Motor neuron (in vitro differentiated cells): ENCODE measurements at regions of chr17 and their contacts with region 1.

Region 1: DNA sequence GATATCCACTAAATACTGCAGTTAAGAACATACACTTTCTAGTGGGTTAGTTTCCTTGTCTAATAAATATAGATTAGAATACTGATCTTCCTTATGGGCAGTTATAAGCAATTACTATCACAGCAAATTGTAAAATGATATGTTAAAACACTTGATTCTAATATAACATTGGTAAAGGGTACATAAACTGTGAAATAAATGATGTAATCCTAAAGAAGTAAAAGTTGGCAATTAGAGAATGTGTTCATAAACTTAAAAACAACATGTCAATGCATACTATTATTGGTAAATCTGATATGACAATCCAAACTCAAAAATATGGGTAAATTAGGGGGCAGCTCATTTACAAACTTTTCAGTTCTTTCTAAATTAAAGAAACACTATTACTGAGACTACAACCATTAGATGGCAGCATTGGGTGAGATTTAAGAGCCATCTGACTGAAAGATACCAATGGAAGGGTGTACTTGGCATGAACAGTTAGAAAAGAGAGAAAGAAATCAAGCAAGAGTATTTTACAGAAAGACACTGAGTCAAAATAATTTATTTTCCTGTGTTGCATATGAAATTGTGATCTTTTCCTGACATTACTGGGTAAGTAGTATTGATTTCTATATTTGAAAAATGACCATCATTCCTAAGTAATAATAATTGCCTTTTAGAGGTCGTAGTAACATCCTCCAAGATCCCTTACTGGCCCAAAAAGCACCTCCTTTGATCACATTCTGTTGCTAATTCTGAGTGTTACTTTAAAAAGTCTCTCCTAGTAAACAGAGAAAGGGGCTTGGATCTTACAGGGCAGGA is 119.6 kb downstream of the SPAG9 start:
- ATAC-seq: peak in 5 of 8 experiments; percentile 48 to 71 (median 55)
- H3K4me3 ChIP-seq: no peak overlapping the region
- H3K27ac ChIP-seq: no peak overlapping the region
- H3K4me1 ChIP-seq: no peaks in the 10 kb centered on the region

Region 2: DNA sequence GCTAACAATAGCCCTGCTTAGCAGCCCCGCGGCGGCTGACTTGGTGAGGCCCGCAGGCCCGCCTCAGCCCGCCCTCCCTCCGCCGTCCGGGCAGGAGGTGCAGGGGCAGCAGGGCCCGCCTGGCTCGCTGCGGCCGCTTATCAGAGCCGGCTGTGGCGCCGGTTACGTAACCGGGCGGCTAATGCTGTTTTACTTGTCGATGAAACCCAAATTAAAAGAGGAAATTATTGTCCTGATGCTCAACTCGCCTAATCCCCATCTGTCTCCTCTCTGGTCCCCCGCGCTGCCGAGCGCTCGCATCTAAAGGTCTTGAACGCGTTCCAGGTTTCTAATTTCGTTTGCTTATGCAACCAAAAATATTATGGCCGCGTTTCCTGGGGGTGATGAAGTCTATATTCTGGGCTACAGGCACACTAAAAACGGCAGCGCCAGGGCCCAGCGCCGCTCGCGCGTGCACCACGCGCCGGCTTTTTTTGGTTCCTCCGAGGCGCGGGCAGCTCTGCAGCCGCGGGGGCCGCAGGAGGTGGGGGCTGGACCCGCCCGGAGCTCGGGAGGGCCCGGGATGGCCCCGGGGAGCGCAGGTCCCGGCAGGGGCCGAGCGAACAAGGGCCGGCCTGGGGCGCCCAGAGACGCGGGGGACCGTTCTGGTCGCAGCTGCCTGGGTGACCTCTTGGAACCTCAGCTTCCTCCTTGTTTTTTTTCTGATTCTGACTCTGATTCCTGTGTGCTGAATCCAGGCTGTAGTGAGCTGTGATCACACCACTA is 69.7 kb before region 1 on chr17:
- in situ Hi-C with region 1: no loop called
- ATAC-seq: peak; percentile 80 to 95 (median 86)
- H3K4me3 ChIP-seq: peak overlapping the region; percentile 5 to 28 (median 13)
- H3K27ac ChIP-seq: peak overlapping the region; percentile 76 to 83
- H3K4me1 ChIP-seq: peaks cover 34% of the 10 kb centered on the region in 2 donors

Region 3: DNA sequence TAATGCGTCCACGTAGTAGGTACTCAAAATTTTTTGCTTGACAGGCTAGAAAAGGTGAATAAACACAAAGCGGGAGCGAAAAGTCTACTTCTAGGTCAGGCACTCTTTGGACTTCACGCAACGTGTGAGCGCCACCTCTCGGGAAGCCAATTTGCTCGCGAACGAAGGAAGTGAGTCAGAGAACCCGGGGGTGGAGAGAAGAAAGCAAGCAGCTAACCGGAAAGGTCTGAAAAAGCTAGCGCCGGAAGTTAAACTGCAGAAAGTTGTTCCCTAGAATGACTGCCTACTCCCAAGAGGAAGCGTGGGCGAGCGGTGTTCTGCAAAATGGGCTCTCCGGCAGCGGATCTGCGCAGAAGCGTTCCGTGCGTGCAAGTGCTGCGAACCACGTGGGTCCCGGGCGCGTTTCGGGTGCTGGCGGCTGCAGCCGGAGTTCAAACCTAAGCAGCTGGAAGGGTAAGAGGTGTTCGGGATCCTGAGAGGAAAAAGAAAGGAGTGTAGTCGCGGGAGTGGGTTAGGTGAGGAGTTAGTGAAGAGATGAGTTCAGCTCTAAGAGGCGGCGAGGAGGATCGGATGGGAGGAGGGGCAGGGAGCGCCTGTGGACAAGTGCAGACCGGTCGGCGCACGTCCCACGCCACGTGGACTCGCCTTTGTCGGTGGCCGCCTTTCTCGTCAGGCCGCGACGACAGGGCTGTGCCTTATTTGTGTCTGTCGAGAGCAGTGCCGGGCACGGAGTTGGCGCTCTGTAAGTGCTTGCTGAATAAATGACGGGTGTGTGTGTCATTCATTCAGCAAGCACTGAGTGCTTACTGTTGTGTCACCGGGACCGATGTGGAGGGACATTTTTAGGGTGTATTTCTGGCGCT is 152.4 kb after region 1 on chr17 and contains the start of gene NME1:
- in situ Hi-C with region 1: loop called in 2 of 9 experiments (anchors 10 kb)
- ATAC-seq: peak; percentile 83 to 97 (median 92)
- H3K4me3 ChIP-seq: peak within 1 kb of the TSS; percentile 50 to 72 (median 58)
- H3K27ac ChIP-seq: peak within 1 kb of the TSS; percentile 77 to 84
- H3K4me1 ChIP-seq: peaks cover 8 to 14% of the 10 kb centered on the region in 2 donors
- total RNA-seq, gene NME1: 140 to 332 (median 213) TPM

Region 4: DNA sequence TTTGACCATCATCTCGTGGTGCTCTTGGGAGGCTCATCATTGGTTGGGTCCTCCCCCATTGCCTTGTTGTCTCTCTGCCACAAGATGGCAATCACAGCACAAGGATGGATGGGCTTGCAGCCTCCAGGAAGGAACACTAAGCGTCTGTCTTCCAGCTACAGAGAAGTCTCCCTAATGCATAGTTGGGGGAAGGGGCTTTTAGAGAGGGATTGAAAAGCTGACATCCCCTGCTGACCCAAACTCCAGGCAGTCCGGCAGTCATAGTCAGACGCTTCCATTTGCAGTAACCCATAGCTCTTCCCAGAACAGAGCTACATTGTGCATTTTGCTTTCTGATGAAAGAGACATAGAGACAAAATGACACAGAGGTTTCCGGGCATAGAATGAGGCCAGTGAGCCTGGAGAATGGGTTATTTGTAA is 370.7 kb after region 1 on chr17:
- in situ Hi-C with region 1: no loop called
- ATAC-seq: peak; percentile 87 to 96 (median 94)
- H3K4me3 ChIP-seq: no peak overlapping the region
- H3K27ac ChIP-seq: no peak overlapping the region
- H3K4me1 ChIP-seq: peaks cover 6% of the 10 kb centered on the region in 2 donors